ENCODE measurements at regions of chr11 and their contacts with region 1.

Region 1: DNA sequence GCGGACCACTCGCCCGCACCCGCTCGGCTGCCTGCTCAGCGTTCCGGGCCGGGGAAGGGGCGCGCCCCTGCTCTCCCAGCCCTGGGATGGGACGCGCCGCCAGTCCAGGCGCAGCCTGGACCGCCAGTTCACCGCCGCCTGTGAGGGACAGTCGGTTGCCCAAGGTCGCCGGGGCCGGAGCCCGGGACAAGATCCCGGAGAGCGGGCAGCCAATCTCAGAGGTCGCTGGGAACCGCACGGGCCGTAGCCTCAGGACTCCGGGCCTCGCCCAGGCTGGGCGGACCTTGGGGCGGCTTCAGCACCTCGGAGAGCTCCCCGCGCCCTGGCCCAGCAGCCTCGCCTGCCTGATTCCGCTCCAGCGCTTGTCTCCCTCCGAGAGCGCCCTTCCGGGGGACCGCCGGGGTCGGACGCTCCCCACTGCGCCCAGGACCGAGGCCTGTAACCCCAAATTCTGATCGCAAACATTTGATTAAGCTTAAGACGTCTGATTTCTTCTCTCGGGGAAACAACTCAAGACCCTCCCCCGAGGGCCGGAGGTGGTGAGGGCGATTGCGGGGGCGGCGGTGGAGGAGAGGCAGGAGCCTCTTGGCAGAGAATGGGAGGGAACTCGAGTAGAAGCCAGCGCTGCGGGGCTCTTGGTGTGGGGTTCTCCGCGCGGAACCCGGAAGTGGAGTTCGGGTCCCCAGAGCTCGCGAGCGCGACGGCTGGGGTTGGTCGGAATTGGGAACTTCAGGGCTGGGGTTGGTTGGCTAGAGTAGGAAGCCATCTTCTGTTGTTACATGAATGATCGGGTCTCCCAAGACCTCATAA is 1.1 kb upstream of the CHRM4 start:
- DNase-seq: peak; percentile 91 to 94 (median 92)
- H3K4me3 ChIP-seq: peak overlapping the region in 2 of 4 donors; percentile 22 to 61
- H3K27ac ChIP-seq: no peak overlapping the region
- H3K4me1 ChIP-seq: peaks cover 19 to 40% of the 10 kb centered on the region in 2 donors
- H3K27me3 ChIP-seq: peaks cover 19% of the 10 kb centered on the region
- CTCF ChIP-seq: peak in 1 of 6 experiments; percentile 1
- POLR2A ChIP-seq: no peak

Region 2: DNA sequence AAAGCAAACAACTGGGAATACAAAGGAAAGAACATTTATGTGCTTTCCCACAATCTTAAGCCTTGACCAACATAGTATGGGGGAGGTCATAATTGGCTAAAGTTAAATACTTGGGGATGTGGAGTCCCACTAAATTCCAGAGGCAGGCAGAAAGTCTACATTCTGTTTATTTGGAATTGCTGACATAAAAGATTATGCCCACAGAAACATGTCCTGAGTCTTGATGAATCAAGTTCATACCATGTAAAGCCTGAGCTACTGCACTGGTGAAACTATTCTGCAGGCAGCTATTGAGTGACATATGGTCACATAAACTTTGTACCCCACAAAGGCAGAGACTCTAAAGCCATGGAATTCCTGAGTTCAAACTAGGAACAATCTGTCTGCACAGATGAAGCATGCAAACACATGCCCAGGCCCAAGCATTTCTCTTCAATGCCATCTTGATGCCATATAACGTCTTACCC is 68.9 kb after region 1 on chr11:
- intact Hi-C with region 1: loop called in 1 of 2 experiments (anchors 10 kb)
- DNase-seq: no peak
- H3K4me3 ChIP-seq: no peak overlapping the region
- H3K27ac ChIP-seq: no peak overlapping the region
- H3K4me1 ChIP-seq: peaks cover 12 to 13% of the 10 kb centered on the region in 2 donors
- H3K27me3 ChIP-seq: no peaks in the 10 kb centered on the region
- CTCF ChIP-seq: no peak
- POLR2A ChIP-seq: no peak

Region 3: GRCh38 chr11:46537537-46538295 is 145.1 kb after region 1 on chr11:
- intact Hi-C with region 1: loop called (anchors 5 kb)
- DNase-seq: peak; percentile 65 to 82 (median 69)
- H3K4me3 ChIP-seq: no peak overlapping the region
- H3K27ac ChIP-seq: peak overlapping the region in 1 of 5 donors; percentile 18
- H3K4me1 ChIP-seq: peaks cover 16 to 38% of the 10 kb centered on the region in 2 donors
- H3K27me3 ChIP-seq: no peaks in the 10 kb centered on the region
- CTCF ChIP-seq: peak; percentile 81 to 91 (median 86)
- POLR2A ChIP-seq: no peak

Region 4: GRCh38 chr11:46601129-46601528 is 208.5 kb after region 1 on chr11:
- intact Hi-C with region 1: loop called in 1 of 2 experiments (anchors 10 kb)
- DNase-seq: no peak
- H3K4me3 ChIP-seq: no peak overlapping the region
- H3K27ac ChIP-seq: peak overlapping the region; percentile 74 to 96 (median 85)
- H3K4me1 ChIP-seq: peaks cover 22 to 33% of the 10 kb centered on the region in 2 donors
- H3K27me3 ChIP-seq: no peaks in the 10 kb centered on the region
- CTCF ChIP-seq: no peak
- POLR2A ChIP-seq: no peak

Measured in adrenal gland (tissue), 19 donors.